ENCODE measurements at regions of chr5 and their contacts with region 1.

Region 1: GRCh38 chr5:73454351-73455036 is 5.9 kb upstream of the FOXD1 start:
- DNase-seq: peak; percentile 84
- ATAC-seq: peak; percentile 78
- H3K4me3 ChIP-seq: no peak overlapping the region
- H3K27ac ChIP-seq: no peak overlapping the region
- H3K4me1 ChIP-seq: no peaks in the 10 kb centered on the region
- H3K27me3 ChIP-seq: no peaks in the 10 kb centered on the region
- CTCF ChIP-seq: peak; percentile 75

Region 2: GRCh38 chr5:72955768-72956323 is 498.6 kb before region 1 on chr5 and contains the start of gene FCHO2:
- CTCF ChIA-PET with region 1: no interaction called
- POLR2A ChIA-PET with region 1: no interaction called
- intact Hi-C with region 1: loop called (anchors 10 kb)
- DNase-seq: peak; percentile 97
- ATAC-seq: peak; percentile 68
- H3K4me3 ChIP-seq: peak within 1 kb of the TSS; percentile 71
- H3K27ac ChIP-seq: peak within 1 kb of the TSS; percentile 88
- H3K4me1 ChIP-seq: peaks cover 51% of the 10 kb centered on the region
- H3K27me3 ChIP-seq: no peaks in the 10 kb centered on the region
- CTCF ChIP-seq: peak; percentile 62
- total RNA-seq, gene FCHO2: 3.7 and 5.9 TPM in 2 replicates

Region 3: DNA sequence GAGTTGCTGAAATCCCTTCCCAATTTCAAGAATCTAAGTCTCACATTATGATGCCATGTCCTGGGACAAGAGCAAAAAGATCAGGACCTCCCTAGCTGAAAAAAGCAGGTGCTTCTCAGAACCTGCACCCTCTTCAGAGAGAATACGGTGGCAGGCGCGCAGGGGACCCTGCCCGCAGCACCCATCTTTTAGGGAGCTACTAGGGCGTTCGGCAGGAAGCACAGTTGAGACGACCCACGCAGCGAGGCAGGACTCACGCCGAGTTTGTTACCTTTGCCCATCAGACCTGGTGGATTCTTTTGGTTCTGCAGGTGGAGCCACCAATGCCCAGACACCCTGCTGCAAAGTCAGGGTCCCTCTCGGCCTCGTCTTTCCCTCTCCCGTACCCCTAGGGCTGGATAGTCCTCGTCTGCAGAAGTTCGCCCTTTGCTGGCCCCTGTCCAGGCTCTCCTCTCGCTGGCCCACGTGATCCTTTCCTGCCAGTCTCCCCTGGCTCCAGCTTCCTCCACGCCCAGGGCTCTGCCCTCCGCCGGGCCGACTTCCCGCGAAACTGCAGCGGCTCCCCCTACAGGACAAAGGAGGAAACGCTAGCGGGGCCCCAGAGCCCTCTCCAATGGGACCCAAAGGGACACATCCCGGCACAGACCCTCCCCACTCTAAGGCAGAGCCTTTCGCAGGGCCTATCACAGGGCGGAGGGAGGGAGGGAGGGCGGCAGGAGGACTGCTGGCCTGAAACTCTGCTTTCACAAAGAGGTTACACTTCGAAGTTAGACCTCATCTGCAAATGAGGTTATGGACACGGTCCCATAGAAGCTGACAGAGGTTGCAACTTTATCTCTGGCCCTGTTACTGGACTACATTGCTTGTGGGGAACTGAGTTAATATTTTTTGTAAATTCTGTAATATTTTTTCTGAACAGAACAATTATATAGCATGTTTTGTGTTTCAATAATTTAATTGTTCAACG is 252.7 kb before region 1 on chr5:
- CTCF ChIA-PET with region 1: interaction called, 11 read pairs
- POLR2A ChIA-PET with region 1: no interaction called
- intact Hi-C with region 1: no loop called
- DNase-seq: peak; percentile 85
- ATAC-seq: peak; percentile 99
- H3K4me3 ChIP-seq: peak overlapping the region; percentile 45; the same call in 1 of the 2 replicates
- H3K27ac ChIP-seq: no peak overlapping the region
- H3K4me1 ChIP-seq: 0 out of 2 replicates have a peak, but pooled peaks cover 3% of the 10 kb centered on the region
- H3K27me3 ChIP-seq: no peaks in the 10 kb centered on the region
- CTCF ChIP-seq: peak; percentile 79

Region 4: DNA sequence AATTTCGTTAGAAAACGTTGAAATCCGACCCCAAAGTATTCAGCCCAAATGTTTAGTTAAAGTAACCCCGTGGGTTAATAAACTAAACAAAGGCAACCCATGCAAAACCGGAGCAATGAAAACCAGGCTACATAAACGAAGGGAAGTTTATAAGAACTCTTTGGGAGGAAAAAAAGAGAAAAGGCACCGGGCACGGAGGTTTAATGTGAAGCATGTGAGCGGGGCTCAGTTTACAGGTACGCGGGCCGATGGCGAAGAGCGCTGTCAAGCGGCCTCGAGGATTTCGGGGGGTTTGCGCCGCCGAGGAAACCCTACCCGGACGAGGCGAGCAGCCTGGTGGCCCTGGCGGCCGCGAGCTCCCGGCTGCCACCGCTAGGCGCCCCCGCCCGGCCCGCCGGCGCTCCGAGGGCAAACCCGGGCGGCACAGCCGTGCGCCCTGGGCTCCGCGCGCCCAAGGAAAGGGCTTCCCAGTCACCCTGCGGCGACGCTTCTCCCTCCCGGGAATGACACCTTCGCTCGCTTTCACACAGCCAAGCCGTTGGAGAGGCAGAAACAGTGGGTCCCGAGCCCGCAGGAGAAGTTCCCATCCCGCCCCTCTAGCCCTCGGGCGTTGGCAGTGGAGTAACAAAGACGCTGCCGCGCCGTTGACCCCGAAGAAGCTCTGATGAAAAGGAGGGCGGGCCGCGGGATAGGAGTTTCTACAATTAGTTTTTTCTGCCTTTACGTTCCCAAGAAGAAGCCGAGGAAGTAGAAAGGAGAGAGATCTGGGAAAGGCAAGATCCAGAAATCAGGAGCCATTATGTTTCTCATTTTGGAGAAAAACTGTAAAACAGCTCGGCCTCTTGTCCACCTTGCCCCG is 155.5 kb before region 1 on chr5:
- CTCF ChIA-PET with region 1: no interaction called
- POLR2A ChIA-PET with region 1: no interaction called
- intact Hi-C with region 1: loop called (anchors 5 kb)
- DNase-seq: peak; percentile 52
- ATAC-seq: peak; percentile 88
- H3K4me3 ChIP-seq: peak overlapping the region; percentile 69
- H3K27ac ChIP-seq: no peak overlapping the region
- H3K4me1 ChIP-seq: peaks cover 12% of the 10 kb centered on the region
- H3K27me3 ChIP-seq: no peaks in the 10 kb centered on the region
- CTCF ChIP-seq: peak; percentile 44; the same call in 1 of the 2 replicates

Region 5: GRCh38 chr5:73496984-73497457 is 42.5 kb after region 1 on chr5:
- CTCF ChIA-PET with region 1: interaction called, 5 read pairs
- POLR2A ChIA-PET with region 1: no interaction called
- intact Hi-C with region 1: loop called (anchors 2 kb)
- DNase-seq: peak; percentile 70
- ATAC-seq: no peak; the same call in 1 of the 2 replicates
- H3K4me3 ChIP-seq: peak overlapping the region; percentile 95; the same call in 1 of the 2 replicates
- H3K27ac ChIP-seq: no peak overlapping the region
- H3K4me1 ChIP-seq: peaks cover 16% of the 10 kb centered on the region; the same call in 1 of the 2 replicates
- H3K27me3 ChIP-seq: no peaks in the 10 kb centered on the region
- CTCF ChIP-seq: peak; percentile 59

Region 6: GRCh38 chr5:73534011-73534644 is 79.6 kb after region 1 on chr5:
- CTCF ChIA-PET with region 1: no interaction called
- POLR2A ChIA-PET with region 1: no interaction called
- intact Hi-C with region 1: loop called (anchors 10 kb)
- DNase-seq: no peak
- ATAC-seq: no peak
- H3K4me3 ChIP-seq: no peak overlapping the region
- H3K27ac ChIP-seq: no peak overlapping the region
- H3K4me1 ChIP-seq: 0 out of 2 replicates have a peak, but pooled peaks cover under 1% of the 10 kb centered on the region
- H3K27me3 ChIP-seq: no peaks in the 10 kb centered on the region
- CTCF ChIP-seq: no peak

Measured in PC-3 (cell line).